ENCODE measurements at regions of chr5 and their contacts with region 1.

Region 1: DNA sequence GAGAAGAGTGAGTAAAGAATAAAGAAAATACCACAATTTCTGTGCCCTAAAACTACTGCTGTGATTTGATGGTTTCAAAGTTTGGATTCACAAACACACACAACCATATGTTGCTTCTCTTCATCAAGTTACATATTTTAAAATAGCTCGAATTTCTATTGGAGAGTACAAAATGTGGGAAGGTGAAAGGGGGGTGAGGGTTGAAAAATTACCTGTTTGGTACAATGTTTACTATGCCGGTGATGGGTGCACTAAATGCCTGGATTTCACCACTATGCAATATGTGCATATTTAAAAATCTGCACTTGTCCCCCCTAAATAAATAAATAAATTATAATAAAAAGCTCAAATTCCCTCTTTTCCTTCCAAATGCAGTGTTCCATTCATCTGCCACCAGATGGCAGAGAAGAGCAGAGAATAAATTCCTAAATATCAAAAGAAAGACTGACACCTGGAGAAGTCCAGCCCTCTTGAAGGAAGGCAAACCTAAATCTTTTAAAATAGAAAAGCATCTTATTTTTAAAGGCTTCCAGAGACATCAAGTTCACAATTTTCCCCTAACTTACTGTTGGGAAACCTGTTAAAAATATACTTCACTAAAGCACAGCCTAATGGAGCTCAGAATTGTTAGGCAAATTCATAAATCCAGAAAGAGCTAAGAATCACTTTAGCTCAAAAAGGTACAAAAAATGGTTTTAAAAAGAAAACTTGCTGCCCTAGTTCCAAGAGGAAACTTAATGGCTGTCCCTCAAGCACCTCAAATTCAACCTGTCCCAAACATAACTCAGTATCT is 24.8 kb upstream of the HNRNPA0 start:
- DNase-seq: no peak
- H3K4me3 ChIP-seq: no peak overlapping the region
- H3K27ac ChIP-seq: no peak overlapping the region
- H3K4me1 ChIP-seq: no peaks in the 10 kb centered on the region
- H3K27me3 ChIP-seq: no peaks in the 10 kb centered on the region
- CTCF ChIP-seq: peak; percentile 75 to 87 (median 79)
- EP300 ChIP-seq: no peak
- POLR2A ChIP-seq: no peak

Region 2: DNA sequence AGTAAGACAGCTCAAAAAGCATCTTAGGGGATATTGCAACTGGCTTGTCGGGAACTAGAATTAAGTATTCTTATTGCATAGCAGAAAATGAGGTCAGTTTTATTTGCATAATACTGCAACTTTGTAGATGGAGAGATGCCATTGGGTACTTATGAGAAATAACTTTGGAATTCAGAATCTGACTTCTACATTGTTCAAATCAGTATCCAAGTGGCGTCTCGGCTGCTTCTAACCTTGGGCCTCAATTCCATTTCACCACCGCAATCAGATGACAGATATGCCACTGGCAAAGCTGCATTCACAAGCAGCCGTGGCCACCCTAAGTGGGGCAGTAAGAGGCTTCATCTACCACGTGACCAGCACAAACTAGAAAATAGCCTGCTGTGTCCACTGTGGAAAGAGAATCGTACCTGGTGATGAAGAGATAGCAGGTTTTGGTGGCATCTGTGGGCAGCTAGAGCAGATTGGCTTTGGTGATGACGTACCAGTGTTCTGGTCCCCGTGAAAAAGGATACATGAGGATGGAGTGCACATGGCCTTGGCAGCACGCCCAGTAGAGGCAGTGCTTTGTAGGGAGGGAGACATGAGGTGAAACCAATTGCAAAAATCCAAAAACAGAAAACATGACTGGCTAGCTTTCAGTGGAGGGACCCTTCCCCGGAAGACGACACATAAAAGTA is 159.6 kb before region 1 on chr5:
- in situ Hi-C with region 1: no loop called
- intact Hi-C with region 1: no loop called
- DNase-seq: no peak
- H3K4me3 ChIP-seq: no peak overlapping the region
- H3K27ac ChIP-seq: no peak overlapping the region
- H3K4me1 ChIP-seq: no peaks in the 10 kb centered on the region
- H3K27me3 ChIP-seq: no peaks in the 10 kb centered on the region
- CTCF ChIP-seq: no peak
- EP300 ChIP-seq: no peak
- POLR2A ChIP-seq: no peak

Region 3: GRCh38 chr5:137822158-137822764 is 43.3 kb after region 1 on chr5:
- in situ Hi-C with region 1: loop called in 1 of 4 experiments (anchors 10 kb)
- intact Hi-C with region 1: loop called (anchors 10 kb)
- DNase-seq: peak; percentile 45
- H3K4me3 ChIP-seq: no peak overlapping the region
- H3K27ac ChIP-seq: no peak overlapping the region
- H3K4me1 ChIP-seq: no peaks in the 10 kb centered on the region
- H3K27me3 ChIP-seq: no peaks in the 10 kb centered on the region
- CTCF ChIP-seq: peak; percentile 30 to 48 (median 38)
- EP300 ChIP-seq: no peak
- POLR2A ChIP-seq: no peak

Region 4: GRCh38 chr5:138065102-138065501 is 286.1 kb after region 1 on chr5:
- in situ Hi-C with region 1: loop called in 1 of 4 experiments (anchors 25 kb)
- intact Hi-C with region 1: no loop called
- DNase-seq: no peak
- H3K4me3 ChIP-seq: no peak overlapping the region
- H3K27ac ChIP-seq: no peak overlapping the region
- H3K4me1 ChIP-seq: no peaks in the 10 kb centered on the region
- H3K27me3 ChIP-seq: no peaks in the 10 kb centered on the region
- CTCF ChIP-seq: no peak
- EP300 ChIP-seq: no peak
- POLR2A ChIP-seq: no peak

Region 5: GRCh38 chr5:138138949-138139780 is 360.2 kb after region 1 on chr5 and contains the start of gene NME5:
- in situ Hi-C with region 1: loop called in 2 of 4 experiments (anchors 10 to 25 kb)
- intact Hi-C with region 1: loop called (anchors 10 kb)
- DNase-seq: peak; percentile 63
- H3K4me3 ChIP-seq: peak within 1 kb of the TSS; percentile 18 to 56 (median 38)
- H3K27ac ChIP-seq: no peak within 1 kb of the TSS
- H3K4me1 ChIP-seq: peaks cover 0 to 15% (median 3%) of the 10 kb centered on the region in 4 donors
- H3K27me3 ChIP-seq: peaks cover 3% of the 10 kb centered on the region
- CTCF ChIP-seq: no peak
- EP300 ChIP-seq: no peak
- POLR2A ChIP-seq: no peak
- total RNA-seq, gene NME5: not detected

Measured in transverse colon (tissue), 4 donors.